Activated T-helper 1 cell treated with anti-CD3 and anti-CD28 coated beads, Interleukin-12 subunit alpha, Interleukin-12 subunit beta, Interleukin-2, Interleukin-4 antibody, amounts not matched to agents 30 ng/mL and 10 ng/mL and 1 ng/mL, durations not matched to agents 14 hours and 24 hours and 36 hours (primary cell): ENCODE measurements at regions of chr7 and their contacts with region 1.

Region 1: DNA sequence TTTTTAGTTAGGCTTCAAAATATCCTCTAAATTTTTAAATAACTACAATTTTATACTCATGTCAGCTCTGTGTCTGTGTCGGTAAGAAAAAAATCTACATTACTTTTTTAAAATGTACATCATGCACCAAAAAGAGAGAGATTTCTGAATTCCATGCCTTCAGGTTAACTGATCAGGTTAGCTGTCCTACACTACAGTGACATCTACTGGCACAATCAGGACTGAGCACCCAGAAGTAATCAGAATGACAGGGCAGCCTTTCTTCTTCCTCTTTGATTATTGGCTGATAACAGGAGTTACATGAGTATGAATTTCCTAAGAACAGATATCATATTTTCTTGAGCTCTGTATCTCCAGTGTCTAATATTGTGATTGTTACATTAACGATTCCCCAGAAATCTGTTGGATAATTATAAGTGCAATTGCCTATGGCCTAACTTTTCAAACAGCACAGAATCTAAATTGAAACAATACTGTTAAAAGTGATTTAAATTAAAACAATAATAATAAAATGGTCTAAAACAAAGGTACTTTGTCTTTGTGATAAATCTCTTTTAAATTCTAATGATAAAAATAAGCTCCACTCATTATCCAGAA is 41.8 kb upstream of the HYCC1 start:
- DNase-seq: peak; percentile 43
- H3K4me3 Mint-ChIP-seq: no peak overlapping the region
- H3K27ac Mint-ChIP-seq: no peak overlapping the region
- H3K4me1 Mint-ChIP-seq: peaks cover 5% of the 10 kb centered on the region
- H3K27me3 Mint-ChIP-seq: peaks cover 2% of the 10 kb centered on the region

Region 2: DNA sequence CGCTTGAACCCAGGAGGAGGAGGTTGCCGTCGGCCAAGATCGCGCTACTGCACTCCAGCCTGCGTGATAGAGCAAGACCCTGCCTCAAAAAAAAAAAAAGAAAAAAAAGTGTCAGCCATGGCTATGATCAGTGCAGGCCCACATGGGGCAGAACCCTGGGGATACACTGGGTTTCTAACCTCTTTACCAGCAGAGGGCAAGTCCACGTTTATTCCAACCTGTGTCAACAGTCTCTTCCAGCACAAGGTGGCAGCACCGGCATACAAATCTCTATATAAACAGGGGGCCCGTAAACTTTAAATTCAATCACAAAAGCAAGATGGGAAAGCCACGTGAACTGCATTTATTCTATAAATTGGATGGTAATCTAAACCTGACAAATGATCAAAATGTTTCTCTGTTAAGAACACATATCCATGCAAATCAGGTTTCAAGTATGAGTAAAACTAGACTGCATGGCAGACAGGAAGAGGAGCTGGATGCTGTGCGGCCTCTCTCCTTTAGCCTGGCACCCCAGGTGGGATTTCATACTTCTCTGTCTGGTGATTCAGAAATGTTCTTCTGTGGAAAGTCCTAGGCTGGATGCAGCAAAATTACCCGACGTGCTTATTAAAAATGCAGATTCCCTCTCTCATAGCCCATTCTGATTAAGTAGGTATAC is 495.7 kb before region 1 on chr7:
- intact Hi-C with region 1: loop called (anchors 1 kb)
- DNase-seq: peak; percentile 55
- H3K4me3 Mint-ChIP-seq: no peak overlapping the region
- H3K27ac Mint-ChIP-seq: no peak overlapping the region
- H3K4me1 Mint-ChIP-seq: peaks cover 44% of the 10 kb centered on the region
- H3K27me3 Mint-ChIP-seq: peaks cover 9% of the 10 kb centered on the region

Region 3: GRCh38 chr7:22782616-22783232 is 273.0 kb before region 1 on chr7:
- intact Hi-C with region 1: loop called (anchors 1 kb)
- DNase-seq: peak; percentile 57
- H3K4me3 Mint-ChIP-seq: no peak overlapping the region
- H3K27ac Mint-ChIP-seq: no peak overlapping the region
- H3K4me1 Mint-ChIP-seq: no peaks in the 10 kb centered on the region
- H3K27me3 Mint-ChIP-seq: peaks cover 8% of the 10 kb centered on the region

Region 4: DNA sequence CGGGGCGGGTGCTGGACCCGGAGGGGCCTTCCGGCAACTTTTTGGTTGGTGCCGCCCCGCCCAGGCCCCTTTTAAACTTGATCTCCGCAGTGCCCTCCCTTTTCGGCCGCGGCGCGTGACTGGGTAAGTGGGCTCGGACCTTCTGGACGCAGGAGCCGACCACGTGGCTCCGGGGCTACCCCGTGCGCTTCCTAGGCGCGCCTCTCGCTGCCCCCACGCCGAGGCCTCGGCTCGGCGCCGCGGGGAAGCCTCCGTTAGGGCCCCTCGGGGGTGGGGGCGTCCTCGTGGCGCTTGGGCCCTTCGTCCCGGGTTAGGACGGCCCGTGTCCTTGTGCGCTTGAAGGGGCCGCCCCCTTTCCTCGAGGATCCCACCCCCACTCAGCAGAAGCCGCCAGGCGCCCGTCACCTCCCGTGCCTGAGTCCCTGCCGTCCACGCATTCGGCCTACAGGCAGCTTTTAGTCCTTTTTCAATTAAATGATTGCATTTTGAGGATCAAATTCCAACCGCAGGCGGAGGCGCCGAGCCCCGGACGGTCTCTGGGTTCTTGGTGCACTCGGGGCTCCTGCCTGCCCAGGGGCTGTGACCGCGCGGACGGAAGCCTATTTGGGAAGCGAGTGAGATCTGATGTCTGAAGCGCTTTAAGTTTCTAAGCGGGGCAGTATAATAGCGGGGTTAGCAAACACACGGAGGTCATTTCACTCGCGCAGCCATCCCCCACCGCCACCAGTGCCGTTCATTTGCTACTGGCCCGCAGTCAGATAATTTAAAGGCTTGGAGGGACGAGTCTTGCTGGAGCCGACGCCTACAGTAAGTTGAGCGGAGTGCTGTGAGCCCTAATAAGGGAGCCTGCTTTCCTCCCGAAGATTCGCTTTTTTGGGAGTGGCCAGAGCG is 201.3 kb before region 1 on chr7:
- intact Hi-C with region 1: loop called (anchors 1 kb)
- DNase-seq: peak; percentile 75
- H3K4me3 Mint-ChIP-seq: peak overlapping the region; percentile 98
- H3K27ac Mint-ChIP-seq: peak overlapping the region; percentile 96
- H3K4me1 Mint-ChIP-seq: peaks cover 34% of the 10 kb centered on the region
- H3K27me3 Mint-ChIP-seq: peaks cover 3% of the 10 kb centered on the region

Region 5: DNA sequence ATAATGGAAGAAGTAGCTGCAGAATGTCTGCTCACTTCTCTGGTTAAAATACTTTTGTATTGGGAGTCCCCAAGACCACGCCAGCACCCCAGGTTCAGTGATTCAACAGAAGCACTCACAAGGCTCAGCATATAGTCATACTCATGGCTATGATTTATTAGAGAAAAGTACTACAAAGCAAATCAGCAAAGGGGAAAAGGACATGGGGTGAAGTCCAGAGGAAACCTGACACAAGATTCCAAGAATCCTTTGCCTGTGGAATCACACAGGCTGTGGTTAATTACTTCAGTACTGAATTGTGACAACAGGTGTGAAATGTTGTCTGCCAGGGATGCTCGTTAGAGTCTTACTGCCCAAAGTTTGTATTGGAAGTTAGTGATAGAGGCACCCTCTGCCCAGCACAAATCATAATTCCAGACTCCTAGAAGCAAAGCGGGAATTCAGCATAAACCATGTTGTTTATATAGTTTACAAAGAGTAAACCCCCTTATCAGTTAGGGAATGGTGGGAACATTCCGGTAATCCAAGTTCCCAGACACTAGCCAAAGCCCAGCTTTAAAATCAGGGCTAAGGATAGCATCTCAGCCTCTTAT is 121.1 kb before region 1 on chr7:
- intact Hi-C with region 1: loop called (anchors 5 kb)
- DNase-seq: no peak
- H3K4me3 Mint-ChIP-seq: no peak overlapping the region
- H3K27ac Mint-ChIP-seq: no peak overlapping the region
- H3K4me1 Mint-ChIP-seq: no peaks in the 10 kb centered on the region
- H3K27me3 Mint-ChIP-seq: no peaks in the 10 kb centered on the region

Region 6: DNA sequence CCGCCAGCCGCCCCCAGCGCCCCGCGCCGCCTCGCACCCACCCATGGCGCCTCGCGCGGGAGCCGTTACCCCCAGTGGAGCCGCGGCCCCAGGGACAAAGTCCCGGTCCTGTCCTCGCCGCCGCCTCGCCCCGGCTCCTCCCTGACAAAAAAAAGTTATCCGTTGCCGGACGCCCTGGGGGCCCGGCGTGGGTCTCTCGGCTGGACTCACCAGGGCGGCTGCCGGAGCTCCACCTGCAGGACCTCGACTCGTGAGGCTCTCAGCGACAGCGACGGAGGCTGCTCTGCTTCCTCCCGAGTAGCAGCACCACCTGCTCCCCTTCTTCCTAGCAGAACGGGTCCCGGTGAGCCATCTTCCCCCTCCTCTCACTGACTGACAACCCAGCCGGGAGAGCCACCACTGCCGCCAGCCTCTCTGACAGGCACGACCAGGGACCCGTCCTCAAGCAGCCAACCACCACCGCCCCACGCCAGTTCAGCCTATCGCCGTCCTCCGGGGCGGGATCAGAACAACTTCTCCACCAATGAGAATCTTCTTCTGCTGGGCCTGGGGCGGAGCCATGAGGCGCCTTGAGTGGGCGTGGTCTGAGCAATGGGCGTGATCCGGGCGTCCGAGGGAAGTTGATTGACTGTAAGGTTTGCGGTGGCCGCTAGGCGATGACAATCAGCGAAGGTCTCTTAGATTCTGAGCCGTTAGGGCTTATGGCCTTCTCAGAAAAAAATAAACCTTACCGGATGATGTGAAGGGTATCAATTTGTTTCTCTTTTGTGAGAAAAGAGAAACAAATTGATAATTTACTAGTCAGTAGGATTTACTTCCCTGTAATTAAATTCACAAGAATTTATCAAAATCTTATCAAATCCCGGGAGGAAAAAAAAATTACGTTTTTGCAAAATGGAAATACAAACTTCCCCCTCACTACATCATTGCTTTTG is 41.7 kb before region 1 on chr7 and contains the start of gene HYCC1:
- intact Hi-C with region 1: loop called (anchors 2 kb)
- DNase-seq: peak; percentile 99
- H3K4me3 Mint-ChIP-seq: peak within 1 kb of the TSS; percentile 93
- H3K27ac Mint-ChIP-seq: peak within 1 kb of the TSS; percentile 94
- H3K4me1 Mint-ChIP-seq: peaks cover 34% of the 10 kb centered on the region
- H3K27me3 Mint-ChIP-seq: no peaks in the 10 kb centered on the region
- total RNA-seq, gene HYCC1: 36.8 and 45.7 TPM in 2 replicates

Region 7: GRCh38 chr7:23105644-23106056 is 50.0 kb after region 1 on chr7 and contains the start of gene KLHL7:
- intact Hi-C with region 1: loop called (anchors 2 kb)
- DNase-seq: peak; percentile 95
- H3K4me3 Mint-ChIP-seq: peak within 1 kb of the TSS; percentile 94
- H3K27ac Mint-ChIP-seq: peak within 1 kb of the TSS; percentile 96
- H3K4me1 Mint-ChIP-seq: peaks cover 30% of the 10 kb centered on the region
- H3K27me3 Mint-ChIP-seq: no peaks in the 10 kb centered on the region
- total RNA-seq, gene KLHL7: 18.2 and 19.7 TPM in 2 replicates